ENCODE measurements at regions of chr19 and their contacts with region 1.

Region 1: GRCh38 chr19:2016041-2016807 is 710 bp upstream of the BTBD2 start:
- DNase-seq: peak; percentile 85
- ATAC-seq: peak; percentile 77
- H3K4me3 Mint-ChIP-seq: peak overlapping the region; percentile 66
- H3K27ac Mint-ChIP-seq: peak overlapping the region; percentile 58
- H3K4me1 Mint-ChIP-seq: peaks cover 21% of the 10 kb centered on the region
- H3K27me3 Mint-ChIP-seq: no peaks in the 10 kb centered on the region

Region 2: DNA sequence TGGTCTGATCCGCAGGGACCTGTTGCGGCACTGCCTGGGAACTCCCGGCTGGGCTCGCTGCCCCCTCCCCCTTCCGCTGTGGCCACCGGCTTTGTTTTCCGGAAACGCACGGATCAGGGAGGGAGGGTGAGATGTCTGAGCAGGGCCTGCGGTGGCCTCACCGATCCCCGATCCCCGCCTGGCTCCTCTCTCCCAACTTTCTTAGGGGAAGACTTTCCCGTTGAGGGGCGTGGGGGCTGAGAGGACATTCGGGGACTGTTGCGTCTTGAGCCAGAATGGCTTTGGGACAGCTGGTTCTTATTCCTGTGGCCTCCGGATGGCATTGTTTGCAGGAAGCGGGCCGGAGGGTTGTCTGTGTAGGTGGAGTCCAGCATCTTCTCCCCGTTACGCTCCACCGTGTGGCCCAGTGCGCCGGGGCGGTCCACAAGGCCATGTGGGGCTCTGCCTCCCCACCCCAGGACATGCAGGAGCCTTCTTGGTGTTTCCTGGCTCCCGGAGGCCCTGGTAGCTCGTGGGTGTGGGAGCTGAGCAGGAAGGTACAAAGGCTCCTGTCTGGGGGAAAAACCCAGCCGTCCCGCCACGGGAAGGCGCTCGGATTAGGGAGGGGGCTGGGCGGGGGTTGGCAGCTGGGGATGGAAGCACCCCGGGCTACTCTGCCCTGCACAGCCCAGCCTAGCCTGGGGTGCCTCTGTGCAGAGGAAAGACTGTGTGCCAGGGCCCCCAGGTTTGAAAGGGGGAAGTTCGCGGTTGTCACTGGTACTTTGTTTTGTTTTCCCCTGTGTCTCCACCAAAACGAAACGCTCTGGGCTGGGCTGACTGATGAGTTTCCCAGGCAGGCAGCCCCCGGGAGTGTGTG is 73.9 kb before region 1 on chr19:
- CTCF ChIA-PET with region 1: no interaction called
- POLR2A ChIA-PET with region 1: no interaction called
- intact Hi-C with region 1: loop called in 1 of 2 experiments (anchors 2 kb)
- DNase-seq: peak; percentile 85
- ATAC-seq: peak; percentile 50
- H3K4me3 Mint-ChIP-seq: peak overlapping the region; percentile 93
- H3K27ac Mint-ChIP-seq: peak overlapping the region; percentile 88
- H3K4me1 Mint-ChIP-seq: peaks cover 30% of the 10 kb centered on the region
- H3K27me3 Mint-ChIP-seq: no peaks in the 10 kb centered on the region

Region 3: DNA sequence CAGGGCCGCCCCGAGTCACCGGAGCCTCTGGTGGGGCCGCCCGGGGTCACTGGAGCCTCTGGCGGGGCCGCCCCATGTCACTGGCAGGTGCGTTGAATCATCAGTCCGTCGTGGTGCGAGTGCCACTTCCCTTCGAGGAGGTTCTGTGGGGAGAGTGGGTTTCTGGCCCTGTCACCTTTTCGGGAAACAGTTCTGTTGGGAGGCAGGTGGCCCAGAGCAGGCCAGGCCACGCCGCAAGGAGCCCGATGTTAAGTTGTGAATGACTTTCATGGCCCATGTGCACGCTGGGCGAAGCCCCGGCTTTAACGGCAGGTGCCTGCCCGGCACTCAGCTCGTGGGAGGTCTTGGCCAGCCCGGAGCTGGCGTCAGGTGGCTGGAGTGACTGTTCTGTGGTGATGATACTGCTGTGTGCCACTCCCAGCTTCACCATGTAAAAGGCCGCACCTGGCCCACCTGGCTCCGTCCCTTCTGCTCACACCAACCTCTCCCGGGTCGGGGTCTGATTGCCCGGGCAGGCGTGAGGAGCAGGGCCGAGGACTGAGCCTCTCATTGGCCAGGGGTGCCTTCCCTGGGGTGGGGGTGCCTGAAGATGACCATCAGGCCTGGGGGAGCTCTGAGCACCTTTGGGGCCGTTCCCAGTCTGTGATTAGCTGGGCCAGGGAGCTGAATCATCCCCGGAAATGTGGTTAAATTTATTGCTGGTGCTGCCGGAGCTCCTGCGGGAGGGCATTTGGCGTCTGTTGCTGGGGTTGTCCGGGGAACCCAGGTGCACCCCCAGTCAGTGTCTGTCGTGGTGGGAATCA is 46.0 kb before region 1 on chr19:
- CTCF ChIA-PET with region 1: no interaction called
- POLR2A ChIA-PET with region 1: no interaction called
- intact Hi-C with region 1: no loop called
- DNase-seq: no peak
- ATAC-seq: no peak
- H3K4me3 Mint-ChIP-seq: no peak overlapping the region
- H3K27ac Mint-ChIP-seq: no peak overlapping the region
- H3K4me1 Mint-ChIP-seq: peaks cover 16% of the 10 kb centered on the region
- H3K27me3 Mint-ChIP-seq: no peaks in the 10 kb centered on the region

Region 4: DNA sequence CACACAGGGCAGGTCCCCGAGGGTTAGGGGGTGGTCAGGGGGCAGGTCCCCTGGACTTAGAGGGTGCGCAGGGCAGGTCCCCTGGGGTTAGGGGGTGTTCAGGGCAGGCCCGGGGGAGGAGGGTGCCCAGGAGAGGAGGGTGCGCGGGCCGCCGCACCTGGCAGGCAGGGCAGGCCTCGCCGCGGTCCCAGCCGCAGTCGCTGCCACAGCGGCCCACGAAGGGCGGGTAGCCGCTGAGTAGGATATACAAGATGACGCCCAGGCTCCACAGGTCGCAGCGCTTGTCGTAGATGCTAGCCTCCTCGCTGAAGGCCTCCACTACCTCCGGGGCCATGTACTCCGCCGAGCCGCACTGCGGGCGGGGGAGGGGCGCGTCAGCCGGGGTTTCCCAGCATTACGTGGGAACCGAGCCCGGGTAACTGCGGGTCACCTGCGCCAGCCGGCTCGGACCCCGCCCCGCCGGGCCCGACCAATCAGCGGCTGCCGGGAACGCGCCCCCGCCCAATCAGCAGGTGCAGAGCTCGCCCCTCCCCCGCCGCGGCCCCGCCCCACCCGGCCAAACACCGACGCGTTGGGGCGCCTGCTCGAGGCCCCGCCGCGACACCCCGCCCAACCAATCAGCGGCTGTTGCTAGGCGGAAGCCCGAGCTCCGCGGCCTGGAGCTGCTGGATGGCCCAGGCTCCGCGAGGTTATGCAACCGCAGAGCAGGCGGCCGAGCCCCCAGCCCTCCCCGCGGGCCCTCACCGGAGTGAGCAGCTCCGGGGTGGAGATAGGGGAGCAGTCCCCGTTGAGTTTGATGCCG is 25.7 kb after region 1 on chr19:
- CTCF ChIA-PET with region 1: interaction called, 5 read pairs
- POLR2A ChIA-PET with region 1: interaction called, 3 read pairs
- intact Hi-C with region 1: loop called in 1 of 2 experiments (anchors 1 kb)
- DNase-seq: peak; percentile 100
- ATAC-seq: peak; percentile 88
- H3K4me3 Mint-ChIP-seq: peak overlapping the region; percentile 73
- H3K27ac Mint-ChIP-seq: peak overlapping the region; percentile 88
- H3K4me1 Mint-ChIP-seq: peaks cover 17% of the 10 kb centered on the region
- H3K27me3 Mint-ChIP-seq: no peaks in the 10 kb centered on the region

Region 5: GRCh38 chr19:2084993-2085720 is 68.9 kb after region 1 on chr19:
- CTCF ChIA-PET with region 1: interaction called, 3 read pairs
- POLR2A ChIA-PET with region 1: interaction called, 3 read pairs
- intact Hi-C with region 1: loop called (anchors 5 kb)
- DNase-seq: peak; percentile 97
- ATAC-seq: peak; percentile 64
- H3K4me3 Mint-ChIP-seq: peak overlapping the region; percentile 96
- H3K27ac Mint-ChIP-seq: peak overlapping the region; percentile 99
- H3K4me1 Mint-ChIP-seq: peaks cover 57% of the 10 kb centered on the region
- H3K27me3 Mint-ChIP-seq: no peaks in the 10 kb centered on the region

Measured in activated CD4-positive, alpha-beta T cell treated with anti-CD3 and anti-CD28 coated beads for 36 hours (primary cell).